ENCODE measurements at regions of chr10 and their contacts with region 1.

Region 1: DNA sequence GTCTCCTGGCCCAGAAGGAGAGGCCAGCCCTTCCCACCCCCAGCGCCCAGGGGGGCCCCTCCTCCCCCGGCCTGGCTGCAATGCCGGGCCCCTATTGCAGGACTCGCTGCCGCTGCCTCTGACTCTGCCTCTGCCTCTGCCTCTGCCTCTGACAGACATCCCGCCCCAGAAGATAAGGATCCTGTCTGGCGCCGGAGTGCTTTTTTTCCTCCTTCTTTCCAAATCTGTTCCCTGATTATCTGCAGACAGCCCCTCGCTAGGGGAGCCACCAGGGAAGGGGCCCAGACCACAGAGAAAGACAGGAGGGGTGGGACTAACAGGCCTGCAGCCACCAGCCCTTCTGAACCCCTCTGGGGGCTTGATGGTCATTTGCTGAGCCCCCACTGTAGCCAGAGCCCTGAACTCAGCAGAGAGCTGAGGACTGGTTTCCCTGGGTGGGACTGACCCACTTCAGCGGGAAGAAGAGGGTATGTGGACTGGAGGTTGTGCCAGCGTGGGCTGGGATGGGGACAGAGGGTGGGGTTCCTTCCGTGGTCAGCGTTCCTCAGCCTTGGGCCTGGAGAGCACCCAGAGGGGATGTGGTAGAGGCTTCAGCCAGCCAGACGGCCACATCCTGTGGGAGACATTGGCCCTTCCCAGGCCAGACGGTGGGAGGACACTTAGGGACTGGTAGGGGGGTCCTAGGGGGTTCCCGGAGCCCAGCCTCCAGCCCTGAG is 22.8 kb downstream of the UNC5B start:
- DNase-seq: peak; percentile 59

Region 2: GRCh38 chr10:71187600-71187999 is 47.5 kb before region 1 on chr10:
- CTCF ChIA-PET with region 1: no interaction called
- POLR2A ChIA-PET with region 1: no interaction called
- DNase-seq: no peak

Region 3: GRCh38 chr10:71217266-71218045 is 17.7 kb before region 1 on chr10:
- CTCF ChIA-PET with region 1: interaction called, 4 read pairs
- POLR2A ChIA-PET with region 1: interaction called, 11 read pairs
- DNase-seq: peak; percentile 41

Region 4: GRCh38 chr10:71278691-71279588 is 43.8 kb after region 1 on chr10:
- CTCF ChIA-PET with region 1: no interaction called
- POLR2A ChIA-PET with region 1: no interaction called
- DNase-seq: no peak

Measured in HEK293T (cell line).